ENCODE measurements at regions of chr19 and their contacts with region 1.

Region 1: GRCh38 chr19:2236314-2237050 is at the starts of genes PLEKHJ1 and SF3A2:
- DNase-seq: peak; percentile 98 to 100 (median 99)
- H3K4me3 ChIP-seq: peak within 1 kb of the TSS; percentile 38 to 88
- H3K4me3 Mint-ChIP-seq: peak within 1 kb of the TSS; percentile 95 to 100 (median 98)
- H3K27ac ChIP-seq: peak within 1 kb of the TSS; percentile 98
- H3K27ac Mint-ChIP-seq: peak within 1 kb of the TSS; percentile 97 to 100 (median 99)
- H3K4me1 ChIP-seq: peaks cover 62% of the 10 kb centered on the region
- H3K4me1 Mint-ChIP-seq: peaks cover 39 to 67% (median 54%) of the 10 kb centered on the region in 4 donors
- H3K27me3 ChIP-seq: no peaks in the 10 kb centered on the region
- H3K27me3 Mint-ChIP-seq: peaks cover 2 to 5% of the 10 kb centered on the region in 2 donors
- total RNA-seq, gene PLEKHJ1: 64.9 to 65.3 TPM
- total RNA-seq, gene SF3A2: 140 to 141 TPM

Region 2: GRCh38 chr19:2096480-2097329 is 139.8 kb before region 1 on chr19 and contains the start of gene IZUMO4:
- CTCF ChIA-PET with region 1: no interaction called
- POLR2A ChIA-PET with region 1: interaction called, 3 read pairs
- intact Hi-C with region 1: loop called (anchors 1 kb)
- DNase-seq: peak; percentile 98 to 100 (median 99)
- H3K4me3 ChIP-seq: peak within 1 kb of the TSS; percentile 49 to 85
- H3K4me3 Mint-ChIP-seq: peak within 1 kb of the TSS; percentile 91 to 97 (median 96)
- H3K27ac ChIP-seq: peak within 1 kb of the TSS; percentile 81
- H3K27ac Mint-ChIP-seq: peak within 1 kb of the TSS; percentile 95 to 99 (median 96)
- H3K4me1 ChIP-seq: peaks cover 38% of the 10 kb centered on the region
- H3K4me1 Mint-ChIP-seq: peaks cover 12 to 44% (median 28%) of the 10 kb centered on the region in 4 donors
- H3K27me3 ChIP-seq: no peaks in the 10 kb centered on the region
- H3K27me3 Mint-ChIP-seq: no peaks in the 10 kb centered on the region
- total RNA-seq, gene IZUMO4: 18.6 to 22.1 TPM

Region 3: DNA sequence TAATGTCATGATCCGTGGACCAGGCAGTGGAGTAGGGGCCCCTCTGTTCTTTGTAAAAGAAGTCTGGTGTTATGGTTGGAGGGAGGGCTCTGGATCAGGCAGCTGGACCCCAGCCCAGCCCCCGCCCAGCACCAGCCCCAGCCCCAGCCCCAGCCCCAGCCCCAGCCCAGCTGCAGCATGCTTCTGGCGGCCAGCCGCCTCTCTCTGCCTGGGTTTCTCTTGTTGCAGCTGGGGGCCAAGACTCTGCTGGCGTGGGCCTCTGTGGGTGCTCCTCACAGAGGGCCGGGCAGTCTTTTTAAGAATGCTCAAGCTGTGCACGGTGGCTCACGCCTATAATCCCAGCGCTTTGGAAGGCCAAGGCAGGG is 54.9 kb before region 1 on chr19:
- CTCF ChIA-PET with region 1: no interaction called
- POLR2A ChIA-PET with region 1: no interaction called
- intact Hi-C with region 1: no loop called
- DNase-seq: no peak
- H3K4me3 ChIP-seq: no peak overlapping the region
- H3K4me3 Mint-ChIP-seq: no peak overlapping the region
- H3K27ac ChIP-seq: no peak overlapping the region
- H3K27ac Mint-ChIP-seq: no peak overlapping the region
- H3K4me1 ChIP-seq: no peaks in the 10 kb centered on the region
- H3K4me1 Mint-ChIP-seq: peaks cover 0 to 19% (median 5%) of the 10 kb centered on the region in 4 donors
- H3K27me3 ChIP-seq: no peaks in the 10 kb centered on the region
- H3K27me3 Mint-ChIP-seq: no peaks in the 10 kb centered on the region

Region 4: DNA sequence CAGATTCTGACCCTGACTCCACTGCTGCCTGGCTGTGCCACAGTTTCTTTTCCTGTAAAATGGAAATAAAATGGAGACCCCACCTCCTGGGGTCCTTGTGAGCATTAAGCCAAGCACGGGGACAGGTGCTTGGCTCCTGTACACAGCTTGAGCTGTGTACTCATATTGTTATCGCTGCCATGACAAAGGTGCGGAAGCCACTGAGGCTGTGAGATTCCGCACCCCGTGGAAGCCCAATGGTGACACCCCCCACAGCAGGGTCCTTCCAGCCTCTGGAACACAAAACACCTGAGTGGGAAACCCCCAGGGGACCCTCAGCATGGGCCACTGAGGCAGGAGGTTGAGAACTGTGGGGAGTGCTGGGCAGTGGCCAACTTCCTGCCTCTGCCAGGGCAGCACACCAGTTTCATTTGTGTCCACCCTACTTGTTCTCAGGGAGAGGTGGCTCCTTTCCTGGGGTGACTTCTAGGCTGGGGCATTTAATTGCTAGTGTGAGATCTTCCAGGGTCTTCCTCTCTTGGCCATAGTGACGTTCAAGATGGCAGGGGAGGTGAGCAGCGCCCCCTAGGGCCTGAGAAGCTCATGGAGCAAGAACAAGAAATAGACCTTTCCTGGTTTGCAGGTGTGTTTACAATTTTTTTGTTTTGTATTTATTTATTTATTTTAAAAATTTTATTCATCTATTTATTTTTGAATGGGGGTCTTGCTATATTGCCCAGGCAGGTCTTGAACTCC is 25.1 kb after region 1 on chr19:
- CTCF ChIA-PET with region 1: interaction called, 75 read pairs
- POLR2A ChIA-PET with region 1: interaction called, 325 read pairs
- intact Hi-C with region 1: loop called (anchors 1 kb)
- DNase-seq: peak in 4 of 5 donors; percentile 49 to 57 (median 52)
- H3K4me3 ChIP-seq: no peak overlapping the region
- H3K4me3 Mint-ChIP-seq: peak overlapping the region in 6 of 8 donors; percentile 34 to 74 (median 58)
- H3K27ac ChIP-seq: no peak overlapping the region
- H3K27ac Mint-ChIP-seq: peak overlapping the region in 6 of 7 donors; percentile 75 to 91 (median 88)
- H3K4me1 ChIP-seq: peaks cover 52% of the 10 kb centered on the region
- H3K4me1 Mint-ChIP-seq: peaks cover 19 to 56% (median 31%) of the 10 kb centered on the region in 4 donors
- H3K27me3 ChIP-seq: no peaks in the 10 kb centered on the region
- H3K27me3 Mint-ChIP-seq: no peaks in the 10 kb centered on the region

Region 5: DNA sequence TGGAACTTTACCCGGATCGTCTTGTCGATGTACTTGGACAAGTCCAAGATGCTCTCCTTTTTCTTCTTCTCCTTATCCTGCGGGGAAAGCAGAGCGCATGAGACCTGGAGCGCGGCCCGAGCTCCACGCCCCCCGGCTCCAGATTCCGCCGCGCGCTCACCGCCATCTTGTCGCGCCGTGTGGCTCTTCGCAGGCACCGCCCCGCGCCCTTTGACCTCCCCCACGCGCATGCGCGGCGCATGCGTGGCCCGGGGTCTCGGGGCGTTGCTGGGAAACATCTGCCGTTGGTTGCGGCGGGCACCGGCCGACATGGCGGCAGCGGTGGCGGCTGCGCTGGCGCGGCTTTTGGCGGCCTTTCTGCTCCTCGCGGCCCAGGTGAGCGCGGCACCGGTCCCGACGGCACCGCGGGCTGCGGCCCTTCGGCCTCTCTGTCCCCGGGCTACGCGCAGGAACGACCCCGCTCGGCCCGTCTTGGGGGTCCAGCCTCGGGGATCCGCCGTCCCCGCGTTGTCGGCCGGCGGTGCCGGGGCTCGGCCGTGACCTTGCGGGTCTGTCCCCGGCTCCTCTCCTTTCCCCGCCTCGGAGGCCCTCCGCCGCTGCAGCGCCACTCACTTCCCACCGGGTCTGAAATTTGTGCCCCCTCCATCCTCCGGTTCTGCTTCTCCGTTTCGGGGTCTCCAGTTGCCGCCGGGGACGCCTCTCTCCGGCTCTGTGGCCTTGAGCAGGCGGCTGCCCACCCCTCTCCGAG is 92.1 kb after region 1 on chr19 and contains the starts of genes LSM7 and SPPL2B:
- CTCF ChIA-PET with region 1: no interaction called
- POLR2A ChIA-PET with region 1: interaction called, 4 read pairs
- intact Hi-C with region 1: loop called (anchors 1 kb)
- DNase-seq: peak; percentile 91 to 92 (median 91)
- H3K4me3 ChIP-seq: peak within 1 kb of the TSS; percentile 82 to 88
- H3K4me3 Mint-ChIP-seq: peak within 1 kb of the TSS; percentile 99 to 100 (median 100)
- H3K27ac ChIP-seq: peak within 1 kb of the TSS; percentile 76
- H3K27ac Mint-ChIP-seq: peak within 1 kb of the TSS; percentile 97 to 100 (median 99)
- H3K4me1 ChIP-seq: peaks cover 49% of the 10 kb centered on the region
- H3K4me1 Mint-ChIP-seq: peaks cover 22 to 61% (median 47%) of the 10 kb centered on the region in 4 donors
- H3K27me3 ChIP-seq: no peaks in the 10 kb centered on the region
- H3K27me3 Mint-ChIP-seq: no peaks in the 10 kb centered on the region
- total RNA-seq, gene LSM7: 107 to 108 TPM
- total RNA-seq, gene SPPL2B: 76.8 to 82.8 TPM

Region 6: GRCh38 chr19:2427429-2428320 is 191.2 kb after region 1 on chr19 and contains the start of gene TIMM13:
- CTCF ChIA-PET with region 1: no interaction called
- POLR2A ChIA-PET with region 1: interaction called, 5 read pairs
- intact Hi-C with region 1: loop called (anchors 1 kb)
- DNase-seq: peak; percentile 96 to 99 (median 98)
- H3K4me3 ChIP-seq: peak within 1 kb of the TSS; percentile 61 to 79
- H3K4me3 Mint-ChIP-seq: peak within 1 kb of the TSS; percentile 90 to 97 (median 94)
- H3K27ac ChIP-seq: peak within 1 kb of the TSS; percentile 95
- H3K27ac Mint-ChIP-seq: peak within 1 kb of the TSS; percentile 93 to 99 (median 99)
- H3K4me1 ChIP-seq: peaks cover 21% of the 10 kb centered on the region
- H3K4me1 Mint-ChIP-seq: peaks cover 6 to 19% (median 12%) of the 10 kb centered on the region in 4 donors
- H3K27me3 ChIP-seq: no peaks in the 10 kb centered on the region
- H3K27me3 Mint-ChIP-seq: no peaks in the 10 kb centered on the region
- total RNA-seq, gene TIMM13: 30.6 to 31.6 TPM